Lower leg skin (tissue), 4 donors: ENCODE measurements at regions of chr6 and their contacts with region 1.

Region 1: DNA sequence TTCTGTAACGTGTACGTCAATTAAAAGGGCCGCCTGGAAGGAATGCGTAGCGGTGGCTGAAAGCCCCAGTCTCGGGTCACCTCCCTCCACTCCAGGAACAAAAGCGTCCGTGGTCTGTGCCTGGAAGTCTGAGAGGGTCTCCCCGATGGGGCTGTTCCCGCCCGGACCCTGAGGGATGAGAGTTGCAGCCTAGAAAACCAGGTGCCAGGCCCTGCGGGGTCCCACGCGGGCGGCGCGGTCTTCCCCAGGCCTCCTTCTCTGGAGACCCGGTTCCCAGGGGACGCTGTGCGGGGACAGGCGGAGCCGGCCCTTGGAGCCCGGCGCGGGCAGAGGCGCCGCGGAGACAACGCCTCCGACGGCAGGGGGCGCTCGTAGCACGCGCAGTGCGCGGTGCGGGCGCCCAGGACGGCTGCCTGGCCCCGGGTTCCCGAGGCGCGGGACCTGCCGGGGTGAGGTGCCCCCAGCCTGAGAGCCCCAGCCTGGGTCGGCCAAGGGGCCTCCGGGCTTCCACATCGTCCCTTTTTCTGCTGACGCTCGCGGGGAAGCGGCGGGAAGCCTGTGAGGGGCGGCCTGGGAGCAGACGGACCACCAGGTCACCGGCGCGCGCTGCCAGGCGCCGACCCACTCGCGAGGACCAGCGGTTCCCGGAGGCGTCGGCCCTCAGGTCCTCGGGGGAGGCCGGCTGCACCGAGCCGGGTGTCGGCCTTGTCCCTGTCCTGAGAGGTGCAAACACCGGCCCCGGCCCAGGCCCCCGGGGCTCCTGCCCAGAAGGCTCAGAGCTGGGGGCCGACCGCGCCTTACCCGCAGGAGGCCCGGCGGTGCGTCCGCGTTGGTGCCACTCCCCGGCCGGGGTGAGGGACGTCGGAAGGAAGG is 5.3 kb upstream of the FOXC1 start:
- DNase-seq: no peak
- H3K4me3 ChIP-seq: peak overlapping the region; percentile 23
- CTCF ChIP-seq: peak in 1 of 3 donors; percentile 39
- POLR2A ChIP-seq: no peak

Region 2: DNA sequence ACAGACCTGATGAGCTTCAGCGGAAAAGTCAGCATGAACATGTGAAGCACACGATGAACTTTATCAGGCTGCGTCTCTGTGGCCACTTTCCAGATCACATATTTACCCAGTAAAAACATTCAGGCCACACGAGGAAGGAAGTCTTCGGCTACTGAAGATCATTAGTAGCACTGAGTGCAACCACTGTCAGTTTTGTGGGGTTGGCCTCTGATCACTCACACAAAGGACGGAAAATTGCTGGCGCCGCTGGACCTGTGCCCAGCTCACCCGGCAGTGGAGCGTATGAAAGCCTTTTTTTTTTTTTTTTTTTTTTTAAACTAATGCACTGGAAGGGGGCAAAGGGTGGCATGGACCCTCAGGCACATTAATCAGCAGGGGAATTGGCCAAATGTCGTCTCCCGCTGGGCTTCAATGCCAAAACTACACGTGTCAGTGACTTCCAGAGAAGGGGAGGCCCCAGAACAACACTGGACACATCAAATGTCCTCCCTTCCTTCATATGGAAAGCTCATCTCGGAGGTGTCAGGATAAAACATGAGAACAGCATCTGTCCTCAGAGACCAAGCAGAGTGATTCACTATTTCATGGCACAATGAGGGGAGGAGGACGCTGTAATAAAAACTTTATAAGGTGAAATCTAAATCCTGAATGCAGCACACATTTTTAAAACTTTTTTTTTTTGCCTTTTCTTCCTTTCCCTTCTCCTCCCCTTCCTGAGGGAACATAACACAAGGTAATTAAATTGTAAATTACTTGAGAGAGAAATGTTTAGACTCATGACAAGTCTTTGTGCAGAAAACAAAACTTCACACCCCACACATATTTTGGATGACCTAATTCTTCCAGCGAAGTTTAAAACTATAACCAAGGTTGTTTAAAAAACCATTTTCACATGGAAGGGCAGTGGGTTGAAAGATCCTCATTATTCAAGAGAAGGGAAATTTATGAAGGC is 228.7 kb after region 1 on chr6:
- intact Hi-C with region 1: no loop called
- DNase-seq: peak in 1 of 2 donors; percentile 33
- H3K4me3 ChIP-seq: no peak overlapping the region
- CTCF ChIP-seq: no peak
- POLR2A ChIP-seq: no peak

Region 3: DNA sequence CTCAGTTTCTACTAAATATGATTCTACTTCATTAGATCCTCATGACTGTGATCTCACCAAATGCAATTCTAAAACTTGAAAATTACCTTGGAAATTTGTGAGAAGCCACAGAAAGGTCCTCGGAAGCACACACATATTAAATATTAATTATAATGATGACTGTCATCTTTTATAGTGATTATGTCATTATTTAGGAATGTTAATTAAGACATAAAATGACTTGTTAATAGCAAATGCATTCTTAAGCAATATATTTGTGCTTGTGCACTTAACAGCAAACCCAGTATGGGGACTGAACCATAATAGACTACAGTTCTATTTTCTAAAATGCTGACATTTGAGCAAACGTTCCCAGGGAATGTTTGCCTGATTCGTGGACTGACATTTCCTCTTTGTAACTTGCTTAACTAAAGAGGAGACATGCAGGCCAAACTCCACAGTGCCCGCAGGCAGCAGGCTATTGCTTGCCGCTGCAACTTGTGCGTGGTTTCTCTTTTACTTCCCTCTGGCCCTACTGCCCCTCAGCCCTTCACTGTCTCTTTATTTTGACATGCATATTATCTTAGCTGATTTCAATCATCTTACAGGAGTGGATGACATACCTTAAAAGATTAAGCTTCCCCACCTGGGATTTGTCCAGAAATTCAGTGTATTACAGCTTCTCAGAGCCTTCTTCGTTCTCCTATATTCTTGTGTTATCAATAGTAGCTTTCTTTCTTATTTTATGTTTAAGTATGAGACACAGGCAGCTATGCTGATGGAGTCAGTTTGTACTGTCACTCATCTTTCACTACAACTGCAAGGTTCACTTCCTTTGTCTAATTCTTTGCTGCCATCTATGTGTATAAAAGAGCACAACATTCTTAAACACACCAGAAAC is 499.5 kb after region 1 on chr6:
- intact Hi-C with region 1: loop called (anchors 5 kb)
- DNase-seq: no peak
- H3K4me3 ChIP-seq: no peak overlapping the region
- CTCF ChIP-seq: no peak
- POLR2A ChIP-seq: no peak

Region 4: DNA sequence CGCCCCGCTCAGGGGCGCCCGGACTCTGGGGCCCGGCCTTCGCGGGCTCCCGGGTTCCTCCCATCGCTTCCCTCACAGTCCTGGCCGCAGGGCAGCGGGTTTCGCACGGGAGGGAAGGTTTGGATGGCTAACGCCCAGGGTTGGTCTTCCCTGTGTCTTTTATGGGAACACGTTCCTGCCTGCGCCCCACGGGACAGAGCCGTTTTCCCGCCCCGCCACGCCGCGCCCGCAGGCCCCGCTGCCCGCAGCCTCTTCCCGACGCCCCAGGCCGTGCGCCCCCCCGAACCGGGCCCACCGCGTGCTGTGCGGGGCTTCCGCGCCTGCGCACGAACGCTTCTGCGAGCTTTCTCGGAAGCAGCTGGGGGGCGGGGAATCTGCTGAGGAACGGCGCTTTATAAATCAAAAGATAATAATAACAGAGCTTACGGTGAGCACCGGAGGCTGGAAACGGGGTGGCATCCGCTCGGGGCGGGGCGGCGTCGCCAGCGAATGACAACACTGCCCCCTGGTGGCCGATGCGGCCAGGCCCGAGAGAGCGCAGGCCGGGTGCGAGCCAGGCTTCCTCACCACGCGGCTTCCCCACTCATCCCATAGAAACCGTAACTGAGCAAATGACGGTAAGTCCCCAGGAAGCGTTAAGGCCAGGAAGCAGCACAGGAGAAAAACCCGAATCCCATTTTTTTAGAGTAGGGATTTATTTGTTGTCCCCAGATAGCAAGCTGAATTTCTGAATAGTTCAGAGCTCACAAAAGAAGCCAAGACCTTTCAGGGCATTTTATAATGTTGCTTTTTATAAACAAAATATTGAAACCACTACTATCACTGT is 1030.0 kb after region 1 on chr6:
- intact Hi-C with region 1: loop called (anchors 2 kb)
- DNase-seq: peak; percentile 71 to 96
- H3K4me3 ChIP-seq: peak overlapping the region; percentile 41
- CTCF ChIP-seq: peak in 2 of 3 donors; percentile 69 to 83
- POLR2A ChIP-seq: no peak

Region 5: DNA sequence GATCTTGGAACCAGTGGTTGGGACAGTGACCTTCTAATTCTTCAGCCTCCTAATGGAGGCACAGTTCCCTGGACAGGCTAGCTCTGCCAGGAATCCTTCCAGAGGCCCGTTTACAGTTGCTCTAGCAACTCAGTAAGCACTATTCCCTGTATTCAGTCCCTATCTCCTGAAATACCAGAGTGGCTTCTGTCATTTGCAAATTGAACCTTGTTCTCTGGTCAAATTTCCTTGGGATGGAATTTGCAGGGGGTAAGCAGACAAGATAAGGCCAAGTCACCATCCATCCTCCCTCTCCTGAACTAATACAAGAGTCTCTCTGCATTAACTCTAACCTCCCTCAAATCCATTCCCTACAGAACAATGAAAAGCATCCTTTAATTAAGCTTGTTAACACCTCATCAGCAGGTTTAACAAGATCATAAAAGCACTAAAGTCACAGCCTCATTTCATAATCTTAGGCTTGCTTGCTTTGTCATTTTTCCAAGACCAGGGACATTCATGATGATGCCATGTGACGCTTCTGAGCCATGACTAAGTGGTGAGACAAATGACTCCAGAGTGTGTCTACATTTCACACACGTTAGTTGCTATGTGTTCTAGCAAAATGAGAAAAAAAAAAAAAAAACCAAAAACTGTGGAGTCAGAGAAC is 1815.4 kb after region 1 on chr6:
- intact Hi-C with region 1: no loop called
- DNase-seq: no peak
- H3K4me3 ChIP-seq: no peak overlapping the region
- CTCF ChIP-seq: no peak
- POLR2A ChIP-seq: no peak